ENCODE measurements at regions of chr4 and their contacts with region 1.

Region 1: GRCh38 chr4:94621491-94622080 is 136.2 kb upstream of the BMPR1B start:
- DNase-seq: peak; percentile 5
- ATAC-seq: no peak
- H3K4me3 Mint-ChIP-seq: no peak overlapping the region
- H3K27ac Mint-ChIP-seq: no peak overlapping the region
- H3K4me1 Mint-ChIP-seq: no peaks in the 10 kb centered on the region
- H3K27me3 Mint-ChIP-seq: no peaks in the 10 kb centered on the region
- CTCF ChIP-seq: peak; percentile 83

Region 2: DNA sequence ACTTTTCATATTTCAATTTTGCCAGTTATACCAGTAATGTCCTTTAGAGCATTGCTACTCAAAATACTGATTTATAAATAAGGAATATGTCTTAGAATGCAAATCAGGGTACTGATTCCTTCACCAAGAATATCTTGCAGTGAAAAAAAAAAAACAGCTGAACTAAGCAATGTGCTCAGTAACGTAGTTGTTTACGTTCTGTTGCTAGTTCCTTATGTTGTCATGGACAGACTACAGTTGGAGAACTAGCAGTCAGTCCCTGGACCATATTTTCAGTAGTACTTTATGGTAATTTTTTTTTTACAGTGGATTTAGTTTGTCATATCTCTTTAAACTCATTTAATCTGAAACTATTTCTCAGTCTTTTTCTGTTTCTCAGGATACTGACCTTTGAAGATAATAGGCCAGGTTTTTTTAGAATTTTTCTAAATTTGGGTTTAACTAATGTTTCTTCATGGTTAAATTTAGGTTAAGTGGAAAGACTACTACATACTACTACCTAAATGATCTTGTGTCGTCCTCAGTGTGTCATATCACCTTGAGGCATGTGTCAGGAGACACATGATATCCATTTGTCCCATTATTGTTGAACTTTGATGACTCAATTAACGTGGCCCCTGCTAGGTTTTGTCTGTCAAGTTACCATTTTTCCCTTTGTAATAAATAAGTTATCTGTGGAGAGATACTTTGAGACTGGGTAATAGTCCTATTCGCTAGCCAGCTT is 392.9 kb before region 1 on chr4:
- CTCF ChIA-PET with region 1: no interaction called
- POLR2A ChIA-PET with region 1: no interaction called
- intact Hi-C with region 1: no loop called
- DNase-seq: no peak
- ATAC-seq: no peak
- H3K4me3 Mint-ChIP-seq: no peak overlapping the region
- H3K27ac Mint-ChIP-seq: no peak overlapping the region
- H3K4me1 Mint-ChIP-seq: peaks cover 13% of the 10 kb centered on the region
- H3K27me3 Mint-ChIP-seq: no peaks in the 10 kb centered on the region
- CTCF ChIP-seq: no peak

Region 3: GRCh38 chr4:95095348-95095974 is 473.9 kb after region 1 on chr4:
- CTCF ChIA-PET with region 1: no interaction called
- POLR2A ChIA-PET with region 1: no interaction called
- intact Hi-C with region 1: loop called (anchors 10 kb)
- DNase-seq: no peak
- ATAC-seq: no peak
- H3K4me3 Mint-ChIP-seq: no peak overlapping the region
- H3K27ac Mint-ChIP-seq: no peak overlapping the region
- H3K4me1 Mint-ChIP-seq: no peaks in the 10 kb centered on the region
- H3K27me3 Mint-ChIP-seq: peaks cover 3% of the 10 kb centered on the region
- CTCF ChIP-seq: peak; percentile 30

Region 4: DNA sequence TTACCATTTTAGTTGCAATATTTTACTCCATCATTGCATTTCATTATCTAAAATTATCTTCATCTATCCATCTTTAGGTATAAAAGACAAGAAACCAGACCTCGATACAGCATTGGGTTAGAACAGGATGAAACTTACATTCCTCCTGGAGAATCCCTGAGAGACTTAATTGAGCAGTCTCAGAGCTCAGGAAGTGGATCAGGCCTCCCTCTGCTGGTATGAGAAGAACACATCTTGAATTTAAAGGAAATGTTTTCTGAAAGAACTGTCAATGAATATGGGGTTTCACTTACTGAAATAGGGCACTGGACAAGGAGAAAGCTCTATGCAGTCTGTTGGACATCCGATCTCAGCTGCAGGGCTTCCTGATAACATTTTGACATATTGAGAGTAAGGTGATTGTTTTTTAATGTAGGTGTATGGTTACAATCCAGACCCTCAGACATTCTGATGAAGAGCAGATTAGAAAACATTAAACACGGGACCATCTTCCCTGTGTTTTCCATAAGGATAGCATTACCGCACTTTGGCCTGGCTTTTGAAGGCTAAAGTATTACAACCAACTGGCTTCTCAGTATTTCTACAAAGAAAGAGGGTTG is 503.4 kb after region 1 on chr4:
- CTCF ChIA-PET with region 1: interaction called, 4 read pairs
- POLR2A ChIA-PET with region 1: no interaction called
- intact Hi-C with region 1: loop called (anchors 10 kb)
- DNase-seq: peak; percentile 3
- ATAC-seq: no peak
- H3K4me3 Mint-ChIP-seq: no peak overlapping the region
- H3K27ac Mint-ChIP-seq: no peak overlapping the region
- H3K4me1 Mint-ChIP-seq: peaks cover 3% of the 10 kb centered on the region
- H3K27me3 Mint-ChIP-seq: peaks cover 2% of the 10 kb centered on the region
- CTCF ChIP-seq: no peak

Measured in activated CD8-positive, alpha-beta T cell treated with anti-CD3 and anti-CD28 coated beads for 36 hours (primary cell).